ENCODE measurements at regions of chr9 and their contacts with region 1.

Region 1: GRCh38 chr9:100426530-100427428 is at the start of gene MSANTD3:
- DNase-seq: peak; percentile 85
- total RNA-seq, gene MSANTD3: 26.4 to 59.4 TPM

Region 2: GRCh38 chr9:100352727-100353505 is 73.9 kb before region 1 on chr9 and contains the start of gene TEX10:
- intact Hi-C with region 1: loop called in 1 of 2 experiments (anchors 5 kb)
- DNase-seq: peak; percentile 97
- total RNA-seq, gene TEX10: 9.9 to 11.2 TPM

Measured in posterior vena cava (tissue), 2 donors.